GM12878 (cell line): ENCODE measurements at regions of chr6 and their contacts with region 1.

Region 1: GRCh38 chr6:134123666-134124208 is 71.3 kb upstream of the SLC2A12 start:
- DNase-seq: peak; percentile 12
- ATAC-seq: peak; percentile 70
- H3K4me3 ChIP-seq: no peak overlapping the region
- H3K27ac ChIP-seq: no peak overlapping the region
- H3K4me1 ChIP-seq: no peaks in the 10 kb centered on the region
- H3K27me3 ChIP-seq: no peaks in the 10 kb centered on the region
- CTCF ChIP-seq: peak; percentile 57 to 58 (median 58)
- EP300 ChIP-seq: no peak
- POLR2A ChIP-seq: no peak
- RAD21 ChIP-seq: peak; percentile 39

Region 2: GRCh38 chr6:134080171-134080795 is 43.5 kb before region 1 on chr6:
- CTCF ChIA-PET with region 1: no interaction called
- POLR2A ChIA-PET with region 1: no interaction called
- RAD21 ChIA-PET with region 1: no interaction called
- SMC1A ChIA-PET with region 1: no interaction called
- in situ Hi-C with region 1: no loop called
- intact Hi-C with region 1: no loop called
- DNase-seq: no peak
- ATAC-seq: peak; percentile 42; the same call in 2 of the 3 replicates
- H3K4me3 ChIP-seq: no peak overlapping the region; the same call in 1 of the 2 replicates
- H3K27ac ChIP-seq: no peak overlapping the region
- H3K4me1 ChIP-seq: peaks cover 8% of the 10 kb centered on the region; the same call in 1 of the 2 replicates
- H3K27me3 ChIP-seq: no peaks in the 10 kb centered on the region
- CTCF ChIP-seq: no peak
- EP300 ChIP-seq: no peak
- POLR2A ChIP-seq: no peak
- RAD21 ChIP-seq: no peak

Region 3: GRCh38 chr6:134138226-134138975 is 14.7 kb after region 1 on chr6:
- CTCF ChIA-PET with region 1: interaction called, 21 read pairs
- POLR2A ChIA-PET with region 1: no interaction called
- RAD21 ChIA-PET with region 1: interaction called, 4 read pairs
- SMC1A ChIA-PET with region 1: no interaction called
- in situ Hi-C with region 1: no loop called
- intact Hi-C with region 1: no loop called
- DNase-seq: no peak
- ATAC-seq: no peak
- H3K4me3 ChIP-seq: no peak overlapping the region
- H3K27ac ChIP-seq: no peak overlapping the region
- H3K4me1 ChIP-seq: no peaks in the 10 kb centered on the region
- H3K27me3 ChIP-seq: 0 out of 4 replicates have a peak, but pooled peaks cover 0 to 2% of the 10 kb centered on the region in 2 experiments
- CTCF ChIP-seq: no peak
- EP300 ChIP-seq: no peak
- POLR2A ChIP-seq: no peak
- RAD21 ChIP-seq: no peak

Region 4: DNA sequence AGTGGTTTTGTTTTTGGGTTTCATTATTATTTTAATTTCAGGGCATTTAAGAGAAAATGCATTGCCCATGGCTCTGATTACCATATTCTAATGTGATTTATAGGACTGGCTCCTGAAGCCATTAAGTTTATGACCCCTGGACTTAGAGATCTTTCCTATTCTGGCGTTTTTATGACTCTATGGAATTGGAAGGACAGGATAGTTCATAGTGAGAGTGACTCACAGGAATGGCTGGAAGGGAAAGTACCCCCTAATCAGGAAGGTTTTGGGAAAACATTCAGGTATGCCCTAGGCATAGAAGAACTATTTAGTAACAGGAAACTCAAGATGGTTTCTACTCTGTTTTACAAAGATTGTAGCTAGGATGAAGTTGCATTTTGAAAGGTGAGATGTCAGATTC is 37.3 kb after region 1 on chr6:
- CTCF ChIA-PET with region 1: interaction called, 12 read pairs
- POLR2A ChIA-PET with region 1: no interaction called
- RAD21 ChIA-PET with region 1: no interaction called
- SMC1A ChIA-PET with region 1: interaction called, 3 read pairs
- in situ Hi-C with region 1: no loop called
- intact Hi-C with region 1: no loop called
- DNase-seq: no peak
- ATAC-seq: no peak
- H3K4me3 ChIP-seq: no peak overlapping the region
- H3K27ac ChIP-seq: no peak overlapping the region
- H3K4me1 ChIP-seq: no peaks in the 10 kb centered on the region
- H3K27me3 ChIP-seq: no peaks in the 10 kb centered on the region
- CTCF ChIP-seq: no peak
- EP300 ChIP-seq: no peak
- POLR2A ChIP-seq: no peak
- RAD21 ChIP-seq: no peak

Region 5: DNA sequence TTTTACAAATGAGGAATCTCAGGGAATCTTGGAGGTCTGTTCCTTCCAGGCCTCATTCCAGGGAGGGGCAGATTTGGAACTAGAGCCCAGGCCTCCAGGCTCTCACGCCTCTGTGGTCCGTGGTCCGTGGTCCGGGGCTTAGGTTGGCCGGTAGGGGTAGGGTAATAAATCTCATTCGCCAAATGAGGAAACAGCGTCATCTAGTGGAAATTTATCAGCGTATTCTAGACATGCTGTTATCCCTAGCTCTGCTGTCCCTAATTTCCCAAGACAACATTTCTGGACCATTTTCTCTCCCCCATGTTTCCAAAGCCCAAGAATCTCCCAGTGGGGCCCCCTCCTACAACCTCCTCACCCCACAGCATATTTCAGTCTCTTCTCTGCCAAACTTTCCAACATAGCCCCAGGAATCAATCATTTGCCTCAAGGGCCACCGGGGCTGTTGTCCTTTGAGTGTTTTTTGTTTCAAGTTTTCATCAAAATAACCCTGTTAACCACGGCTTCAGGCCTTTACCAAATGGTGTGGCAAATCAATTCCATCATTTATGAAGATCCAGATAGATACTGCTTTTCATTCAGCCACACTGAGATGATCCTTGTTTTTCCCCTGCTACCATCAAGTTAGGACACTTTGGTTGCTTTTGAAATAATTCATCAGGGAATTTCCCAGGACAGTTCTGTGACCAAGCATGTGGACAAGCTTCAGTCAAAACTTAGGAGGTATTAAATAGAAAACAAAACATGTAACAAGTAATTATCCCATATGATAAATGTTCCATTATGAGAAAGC is 699.4 kb after region 1 on chr6:
- CTCF ChIA-PET with region 1: interaction called, 6 read pairs
- POLR2A ChIA-PET with region 1: no interaction called
- RAD21 ChIA-PET with region 1: interaction called, 10 read pairs
- SMC1A ChIA-PET with region 1: interaction called, 3 read pairs
- in situ Hi-C with region 1: no loop called
- intact Hi-C with region 1: loop called (anchors 10 kb)
- DNase-seq: peak; percentile 36
- ATAC-seq: peak; percentile 95
- H3K4me3 ChIP-seq: no peak overlapping the region
- H3K27ac ChIP-seq: no peak overlapping the region
- H3K4me1 ChIP-seq: no peaks in the 10 kb centered on the region; the same call in 1 of the 2 replicates
- H3K27me3 ChIP-seq: no peaks in the 10 kb centered on the region
- CTCF ChIP-seq: peak; percentile 78 to 89 (median 80)
- EP300 ChIP-seq: no peak
- POLR2A ChIP-seq: no peak
- RAD21 ChIP-seq: peak; percentile 84